Posterior vena cava (tissue), 2 donors: ENCODE measurements at regions of chr6 and their contacts with region 1.

Region 1: GRCh38 chr6:123636782-123637181 is at the start of gene TRDN:
- DNase-seq: no peak
- total RNA-seq, gene TRDN: 5.4 to 10.3 TPM

Region 2: DNA sequence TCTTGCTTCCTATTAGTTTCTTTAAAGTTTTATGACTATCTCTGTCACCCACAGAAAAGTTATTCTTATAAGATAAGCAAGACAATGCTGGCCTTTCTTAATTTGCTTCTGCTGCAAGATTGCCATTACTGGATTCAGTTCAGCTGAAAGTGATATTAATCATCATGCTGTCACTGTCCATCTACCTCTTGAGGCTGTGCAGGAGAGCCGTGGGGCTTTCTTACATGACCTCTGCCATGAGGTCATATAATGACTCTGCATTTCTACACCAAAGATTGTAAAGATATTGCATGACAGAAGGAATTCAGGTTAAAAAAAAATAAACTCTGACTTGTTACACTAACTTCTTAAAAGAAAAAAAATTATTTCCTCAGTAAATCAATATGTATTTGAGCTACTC is 106.9 kb before region 1 on chr6:
- intact Hi-C with region 1: loop called in 1 of 2 experiments (anchors 10 kb)
- DNase-seq: no peak

Region 3: DNA sequence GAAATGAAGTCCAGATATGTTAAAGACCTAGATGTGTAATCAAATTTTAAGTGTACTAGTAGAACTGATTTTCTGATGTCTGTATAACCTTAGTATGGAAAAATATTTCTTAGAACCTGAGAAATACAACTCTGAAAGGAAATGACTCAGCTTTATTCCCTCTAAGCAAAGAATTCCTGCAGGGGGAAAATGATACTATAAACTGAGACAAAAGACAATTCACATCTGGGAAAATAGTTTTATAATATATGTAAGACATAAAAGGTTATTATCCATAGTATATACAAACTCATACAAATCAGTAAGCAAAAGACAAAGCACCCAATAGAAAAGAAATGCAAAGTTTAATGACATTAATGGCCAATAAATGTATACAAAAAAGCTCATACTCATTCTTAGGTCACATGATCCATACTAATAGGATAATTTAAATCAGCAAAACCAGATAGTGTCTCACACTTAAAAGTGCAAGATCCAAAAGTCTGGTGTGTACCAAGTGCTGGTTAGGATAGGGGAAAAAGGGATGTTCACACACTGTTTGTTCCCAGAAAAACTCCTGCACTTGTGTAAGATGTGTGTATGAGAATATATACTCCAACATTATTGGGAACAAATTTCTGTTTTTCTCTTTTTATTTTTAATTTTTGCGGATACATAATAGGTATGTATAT is 1348.0 kb after region 1 on chr6:
- intact Hi-C with region 1: no loop called
- DNase-seq: no peak